ENCODE measurements at regions of chr13 and their contacts with region 1.

Region 1: GRCh38 chr13:110108347-110109174 is 198.4 kb downstream of the COL4A1 start:
- DNase-seq: peak; percentile 87
- H3K4me3 Mint-ChIP-seq: no peak overlapping the region
- H3K27ac Mint-ChIP-seq: no peak overlapping the region
- H3K4me1 Mint-ChIP-seq: peaks cover 37% of the 10 kb centered on the region
- H3K27me3 Mint-ChIP-seq: no peaks in the 10 kb centered on the region
- CTCF ChIP-seq: peak; percentile 84

Region 2: GRCh38 chr13:108961542-108962125 is 1146.9 kb before region 1 on chr13:
- CTCF ChIA-PET with region 1: interaction called, 18 read pairs
- POLR2A ChIA-PET with region 1: interaction called, 5 read pairs
- intact Hi-C with region 1: loop called (anchors 1 kb)
- DNase-seq: peak; percentile 57
- H3K4me3 Mint-ChIP-seq: no peak overlapping the region
- H3K27ac Mint-ChIP-seq: no peak overlapping the region
- H3K4me1 Mint-ChIP-seq: peaks cover 43% of the 10 kb centered on the region
- H3K27me3 Mint-ChIP-seq: no peaks in the 10 kb centered on the region
- CTCF ChIP-seq: peak; percentile 79

Region 3: GRCh38 chr13:109389892-109390345 is 718.6 kb before region 1 on chr13:
- CTCF ChIA-PET with region 1: no interaction called
- POLR2A ChIA-PET with region 1: no interaction called
- intact Hi-C with region 1: loop called (anchors 5 kb)
- DNase-seq: peak; percentile 94
- H3K4me3 Mint-ChIP-seq: peak overlapping the region; percentile 54
- H3K27ac Mint-ChIP-seq: peak overlapping the region; percentile 95
- H3K4me1 Mint-ChIP-seq: peaks cover 21% of the 10 kb centered on the region
- H3K27me3 Mint-ChIP-seq: no peaks in the 10 kb centered on the region
- CTCF ChIP-seq: no peak

Region 4: DNA sequence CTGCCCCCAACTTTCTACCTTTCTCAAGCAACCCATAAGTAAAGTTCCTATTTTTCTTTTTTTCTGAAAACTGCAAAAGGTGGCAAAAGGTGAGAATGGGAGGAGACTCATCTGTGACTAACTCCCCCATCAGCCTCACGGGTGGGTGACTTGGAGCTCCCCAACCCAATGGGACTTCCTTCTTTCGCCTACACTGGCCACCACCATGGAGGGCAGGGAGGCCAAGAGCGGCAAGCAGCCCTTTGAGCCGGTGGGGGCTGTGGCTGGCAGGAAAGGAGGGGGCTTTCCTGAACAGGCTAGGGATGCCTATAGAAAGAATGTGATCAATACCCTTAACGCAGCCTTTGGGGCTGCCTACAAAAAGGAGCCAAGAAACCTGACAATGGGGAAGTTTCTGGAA is 338.6 kb before region 1 on chr13:
- CTCF ChIA-PET with region 1: no interaction called
- POLR2A ChIA-PET with region 1: no interaction called
- intact Hi-C with region 1: no loop called
- DNase-seq: no peak
- H3K4me3 Mint-ChIP-seq: no peak overlapping the region
- H3K27ac Mint-ChIP-seq: no peak overlapping the region
- H3K4me1 Mint-ChIP-seq: peaks cover 23% of the 10 kb centered on the region
- H3K27me3 Mint-ChIP-seq: no peaks in the 10 kb centered on the region
- CTCF ChIP-seq: no peak

Region 5: DNA sequence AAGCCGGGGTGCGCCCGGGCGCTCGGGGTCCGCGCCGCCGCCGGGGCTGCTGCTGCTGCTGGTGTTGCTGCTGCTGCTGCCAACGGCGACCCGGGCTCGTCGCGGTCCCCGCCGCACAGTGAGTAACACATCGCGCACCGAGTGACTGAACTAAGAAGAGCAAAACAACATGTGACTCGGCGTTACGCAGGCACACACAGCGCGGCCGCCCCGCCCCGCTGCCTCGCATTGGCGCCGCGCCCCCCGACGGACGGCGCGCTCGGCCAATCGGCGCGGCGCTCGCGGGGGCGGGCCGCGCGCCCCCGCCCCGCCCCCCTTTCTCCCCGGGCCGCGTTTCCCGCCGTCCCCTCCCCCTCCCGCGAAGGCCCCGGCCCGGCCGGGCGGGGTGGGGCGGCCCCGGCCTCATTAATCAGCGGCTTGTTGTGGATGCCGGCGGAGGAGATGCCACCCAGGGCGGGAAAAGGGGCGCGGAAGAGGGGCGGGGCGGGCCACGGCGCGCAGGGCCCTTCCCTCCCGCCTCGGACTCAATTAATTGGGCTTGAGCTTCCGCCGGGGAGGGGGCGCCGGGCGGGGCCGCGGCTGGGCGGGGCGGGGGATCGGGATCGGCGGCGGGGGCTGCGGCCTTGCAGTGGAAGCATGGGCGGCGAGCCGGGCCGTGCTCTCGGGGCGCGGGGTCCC is 322.0 kb before region 1 on chr13 and contains the start of gene IRS2:
- CTCF ChIA-PET with region 1: interaction called, 15 read pairs
- POLR2A ChIA-PET with region 1: interaction called, 21 read pairs
- intact Hi-C with region 1: loop called (anchors 1 kb)
- DNase-seq: peak; percentile 92
- H3K4me3 Mint-ChIP-seq: peak within 1 kb of the TSS; percentile 84
- H3K27ac Mint-ChIP-seq: peak within 1 kb of the TSS; percentile 31
- H3K4me1 Mint-ChIP-seq: peaks cover 33% of the 10 kb centered on the region
- H3K27me3 Mint-ChIP-seq: no peaks in the 10 kb centered on the region
- CTCF ChIP-seq: no peak
- total RNA-seq, gene IRS2: 41.8 and 48.5 TPM in 2 replicates

Region 6: GRCh38 chr13:109998726-109999533 is 109.6 kb before region 1 on chr13:
- CTCF ChIA-PET with region 1: interaction called, 8 read pairs
- POLR2A ChIA-PET with region 1: no interaction called
- intact Hi-C with region 1: loop called (anchors 5 kb)
- DNase-seq: peak; percentile 95
- H3K4me3 Mint-ChIP-seq: no peak overlapping the region
- H3K27ac Mint-ChIP-seq: peak overlapping the region; percentile 29
- H3K4me1 Mint-ChIP-seq: peaks cover 37% of the 10 kb centered on the region
- H3K27me3 Mint-ChIP-seq: no peaks in the 10 kb centered on the region
- CTCF ChIP-seq: peak; percentile 14

Region 7: GRCh38 chr13:110715395-110716235 is 607.1 kb after region 1 on chr13:
- CTCF ChIA-PET with region 1: no interaction called
- POLR2A ChIA-PET with region 1: no interaction called
- intact Hi-C with region 1: no loop called
- DNase-seq: peak; percentile 100
- H3K4me3 Mint-ChIP-seq: peak overlapping the region; percentile 92
- H3K27ac Mint-ChIP-seq: peak overlapping the region; percentile 91
- H3K4me1 Mint-ChIP-seq: no peaks in the 10 kb centered on the region
- H3K27me3 Mint-ChIP-seq: no peaks in the 10 kb centered on the region
- CTCF ChIP-seq: peak; percentile 18